ENCODE measurements at regions of chr2 and their contacts with region 1.

Region 1: DNA sequence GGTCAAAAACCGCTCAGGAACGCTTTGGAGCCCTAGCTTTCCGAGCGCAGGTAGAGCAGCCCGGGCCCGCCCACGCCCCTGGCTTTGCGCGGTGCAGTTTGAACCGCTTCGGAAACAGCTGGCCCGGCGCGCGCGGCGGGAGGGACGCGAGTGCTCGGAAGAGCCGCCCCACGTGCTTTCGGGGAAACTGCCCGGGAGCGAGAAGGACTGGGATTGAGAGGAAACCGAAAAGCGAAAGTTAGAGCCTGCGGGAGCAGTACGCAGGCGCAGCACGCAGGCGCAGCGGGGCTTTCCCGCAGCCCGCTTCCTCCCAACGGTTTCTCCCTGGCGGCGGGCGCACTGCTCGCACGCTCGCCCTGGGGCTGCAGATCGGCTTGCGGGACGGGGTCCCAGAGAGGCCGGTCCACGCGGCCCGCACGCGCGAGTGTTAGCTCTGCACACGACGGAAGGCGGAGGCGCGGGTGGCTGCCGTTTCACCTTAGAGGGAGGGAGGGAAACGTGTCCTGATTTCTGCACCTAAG is 6.3 kb upstream of the STAT1 start:
- DNase-seq: peak; percentile 91 to 98 (median 96)
- ATAC-seq: peak; percentile 96 to 99 (median 98)
- H3K4me3 ChIP-seq: peak overlapping the region; percentile 54 to 78 (median 68)
- H3K27ac ChIP-seq: peak overlapping the region; percentile 70 to 96 (median 90)
- H3K4me1 ChIP-seq: peaks cover 0 to 17% (median 7%) of the 10 kb centered on the region in 3 donors
- H3K27me3 ChIP-seq: no peaks in the 10 kb centered on the region
- CTCF ChIP-seq: no peak

Region 2: DNA sequence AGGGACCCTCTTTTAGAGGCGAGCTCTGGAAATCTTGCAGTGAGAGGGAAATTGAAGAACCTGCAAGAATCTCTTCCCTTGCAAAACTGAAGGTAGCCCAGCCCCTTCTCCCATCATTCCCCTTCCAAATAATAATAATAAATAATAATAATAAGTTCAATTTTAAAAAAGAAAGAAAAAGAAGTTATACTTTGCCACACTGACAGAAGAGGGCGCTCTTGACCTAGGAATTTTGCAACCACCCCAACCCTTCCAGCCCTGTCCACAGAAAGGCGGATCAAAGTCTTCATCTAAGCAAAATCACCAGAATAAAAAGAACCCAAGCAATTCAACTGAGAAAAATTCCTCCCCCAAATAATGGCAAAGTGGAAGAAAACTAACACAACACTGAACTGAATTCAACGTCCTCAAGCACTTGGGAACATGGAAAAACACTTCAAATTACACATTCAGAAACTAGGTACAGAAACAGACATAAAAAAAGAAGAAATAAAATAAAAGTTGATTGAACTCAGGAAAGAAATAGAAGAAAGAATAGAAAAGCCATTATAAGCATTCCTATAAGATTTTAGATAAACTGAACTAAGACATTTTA is 238.6 kb before region 1 on chr2:
- intact Hi-C with region 1: loop called in 1 of 3 experiments (anchors 10 kb)
- DNase-seq: peak in 3 of 6 donors; percentile 23 to 52 (median 43)
- ATAC-seq: peak; percentile 63 to 89 (median 86)
- H3K4me3 ChIP-seq: no peak overlapping the region
- H3K27ac ChIP-seq: no peak overlapping the region
- H3K4me1 ChIP-seq: peaks cover 0 to 10% (median 0%) of the 10 kb centered on the region in 3 donors
- H3K27me3 ChIP-seq: no peaks in the 10 kb centered on the region
- CTCF ChIP-seq: peak in 3 of 4 donors; percentile 26 to 45 (median 37)

Region 3: GRCh38 chr2:191145769-191146471 is 125.6 kb after region 1 on chr2:
- intact Hi-C with region 1: no loop called
- DNase-seq: no peak
- ATAC-seq: no peak
- H3K4me3 ChIP-seq: no peak overlapping the region
- H3K27ac ChIP-seq: no peak overlapping the region
- H3K4me1 ChIP-seq: no peaks in the 10 kb centered on the region
- H3K27me3 ChIP-seq: no peaks in the 10 kb centered on the region
- CTCF ChIP-seq: no peak

Region 4: DNA sequence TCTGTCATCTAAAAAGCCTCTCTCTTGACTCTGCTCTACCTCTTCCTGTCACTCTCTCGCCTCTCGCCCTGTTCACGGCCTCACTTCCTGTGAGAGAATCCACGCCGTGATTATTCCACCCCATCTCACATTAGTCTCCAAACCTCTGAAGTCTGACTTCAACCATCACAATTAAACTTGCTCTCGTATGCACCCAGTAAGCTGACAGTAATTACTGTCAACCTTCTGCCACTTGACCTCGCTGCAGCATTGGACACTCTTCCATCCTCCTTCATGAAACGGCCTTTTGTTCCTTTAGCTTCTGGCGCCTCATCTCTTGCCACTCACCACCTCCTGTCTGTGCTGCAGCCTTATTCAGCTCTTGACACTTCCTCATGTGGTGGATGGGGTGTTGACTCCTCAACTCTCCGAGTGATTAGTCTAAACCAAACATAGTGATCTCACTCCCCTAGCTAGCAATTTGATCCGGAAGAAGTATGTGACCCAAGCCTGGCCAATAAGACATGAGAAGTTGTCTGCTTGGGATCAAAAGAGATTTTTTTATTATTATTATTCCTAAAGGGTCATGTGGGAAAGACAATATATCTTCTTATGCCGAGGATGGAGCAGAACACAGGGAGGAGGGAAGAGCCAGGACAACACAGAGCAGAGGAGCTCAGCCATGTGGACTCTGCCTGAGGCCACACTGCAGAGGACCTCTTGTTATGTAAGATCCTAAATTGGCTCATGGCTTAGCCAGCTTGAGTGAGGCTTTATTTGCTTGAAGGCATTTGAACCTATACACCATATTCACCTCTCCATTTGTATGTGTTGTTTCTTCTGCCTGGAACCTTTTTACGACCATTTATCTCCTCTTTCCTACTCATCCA is 186.6 kb after region 1 on chr2:
- intact Hi-C with region 1: no loop called
- DNase-seq: no peak
- ATAC-seq: no peak
- H3K4me3 ChIP-seq: no peak overlapping the region
- H3K27ac ChIP-seq: no peak overlapping the region
- H3K4me1 ChIP-seq: no peaks in the 10 kb centered on the region
- H3K27me3 ChIP-seq: no peaks in the 10 kb centered on the region
- CTCF ChIP-seq: no peak